Kidney (tissue), 22 donors: ENCODE measurements at regions of chr9 and their contacts with region 1.

Region 1: DNA sequence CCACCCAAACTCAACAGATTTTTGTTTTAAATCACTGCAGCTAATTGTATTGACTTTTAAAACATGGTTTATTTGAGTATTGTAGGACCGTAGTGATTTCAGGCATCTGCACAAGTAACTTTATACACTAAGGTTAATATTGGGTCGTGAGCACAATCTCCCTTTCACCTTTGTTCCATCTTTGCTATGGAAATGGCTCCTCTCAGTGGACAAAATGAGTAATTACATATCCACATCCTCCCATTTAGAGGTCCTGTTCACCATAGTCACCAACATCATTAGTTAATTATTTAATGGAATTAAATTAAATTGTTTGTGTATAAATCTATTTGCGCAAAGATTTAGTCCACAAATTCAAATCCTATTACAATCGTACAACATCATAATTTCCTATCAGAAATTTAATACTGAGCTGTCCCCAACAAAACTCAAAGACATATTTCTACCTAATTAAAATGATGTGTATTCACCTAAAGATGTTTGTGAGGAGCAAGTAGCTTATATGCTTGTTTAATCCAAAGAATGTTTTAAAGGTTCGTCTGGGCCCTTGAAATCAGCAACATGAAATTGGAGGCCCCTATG is 173.0 kb upstream of the DAPK1 start:
- DNase-seq: peak in 2 of 5 donors; percentile 86 to 90
- H3K4me3 ChIP-seq: no peak overlapping the region
- H3K27ac ChIP-seq: no peak overlapping the region
- H3K4me1 ChIP-seq: no peaks in the 10 kb centered on the region
- H3K27me3 ChIP-seq: no peaks in the 10 kb centered on the region
- CTCF ChIP-seq: peak; percentile 73

Region 2: DNA sequence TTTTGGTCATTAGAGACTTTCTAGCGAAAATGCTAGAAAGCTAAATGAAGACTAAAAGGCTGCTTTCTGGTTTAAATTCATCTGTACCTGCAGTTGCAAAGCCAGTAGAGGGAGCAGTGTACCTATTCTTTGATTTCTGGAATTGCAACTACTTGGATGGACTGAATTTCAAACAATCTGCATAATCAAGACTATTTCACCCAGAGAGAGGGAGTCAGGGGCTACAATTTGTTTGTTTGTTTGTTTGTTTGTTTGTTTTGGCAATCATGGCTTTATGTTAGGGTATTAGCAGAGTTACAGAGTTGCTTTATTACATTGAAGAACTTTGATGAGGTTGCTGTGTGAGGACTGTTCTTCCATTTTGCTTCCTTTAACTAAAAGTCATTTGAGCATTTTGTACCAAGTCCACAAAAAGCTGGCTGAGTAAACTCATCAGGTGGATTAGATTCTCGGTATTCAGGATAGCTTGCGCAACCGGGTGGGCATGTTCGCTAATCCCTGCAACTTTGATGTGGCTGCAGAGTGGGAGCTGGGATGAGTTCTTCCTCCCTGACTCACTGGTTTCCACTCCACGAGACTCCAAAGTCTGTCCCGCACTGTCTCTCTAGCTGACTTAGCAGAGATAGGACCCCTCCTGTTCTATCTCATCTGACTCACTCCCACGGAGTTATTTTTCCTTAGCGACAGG is 890.5 kb before region 1 on chr9:
- intact Hi-C with region 1: loop called (anchors 10 kb)
- DNase-seq: peak in 4 of 5 donors; percentile 15 to 88 (median 60)
- H3K4me3 ChIP-seq: peak overlapping the region in 2 of 3 donors; percentile 0 to 46
- H3K27ac ChIP-seq: no peak overlapping the region
- H3K4me1 ChIP-seq: peaks cover 0 to 2% (median 0%) of the 10 kb centered on the region in 3 donors
- H3K27me3 ChIP-seq: no peaks in the 10 kb centered on the region
- CTCF ChIP-seq: peak; percentile 78

Region 3: DNA sequence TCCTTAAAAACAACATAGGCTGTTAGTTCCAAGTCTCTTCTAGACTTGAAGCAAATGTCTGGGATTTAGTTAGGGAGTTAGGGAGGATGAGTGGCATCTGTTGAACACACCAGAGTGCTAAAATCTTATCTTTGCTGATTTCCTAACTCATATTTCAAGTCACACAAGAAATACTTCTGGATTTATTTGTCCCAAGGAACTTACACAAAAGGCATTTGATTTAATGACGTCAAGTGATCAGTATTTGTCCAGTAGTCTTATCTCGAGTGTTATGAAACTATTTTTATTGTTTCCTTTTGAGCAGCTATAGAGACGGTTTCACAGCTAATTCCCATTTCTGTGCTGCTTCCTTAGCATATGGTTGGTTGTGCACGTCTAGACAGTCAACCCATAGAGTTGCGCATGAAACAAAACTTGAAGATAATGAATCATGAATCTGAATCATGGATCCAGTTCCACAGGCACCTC is 830.0 kb before region 1 on chr9:
- intact Hi-C with region 1: loop called (anchors 10 kb)
- DNase-seq: peak in 2 of 5 donors; percentile 38 to 46
- H3K4me3 ChIP-seq: no peak overlapping the region
- H3K27ac ChIP-seq: no peak overlapping the region
- H3K4me1 ChIP-seq: no peaks in the 10 kb centered on the region
- H3K27me3 ChIP-seq: no peaks in the 10 kb centered on the region
- CTCF ChIP-seq: no peak

Region 4: GRCh38 chr9:86614871-86615849 is 709.5 kb before region 1 on chr9:
- intact Hi-C with region 1: loop called (anchors 5 kb)
- DNase-seq: peak in 3 of 5 donors; percentile 36 to 70 (median 52)
- H3K4me3 ChIP-seq: no peak overlapping the region
- H3K27ac ChIP-seq: no peak overlapping the region
- H3K4me1 ChIP-seq: no peaks in the 10 kb centered on the region
- H3K27me3 ChIP-seq: no peaks in the 10 kb centered on the region
- CTCF ChIP-seq: peak; percentile 34